Activated naive CD4-positive, alpha-beta T cell treated with anti-CD3 and anti-CD28 coated beads for 36 hours (primary cell): ENCODE measurements at regions of chr12 and their contacts with region 1.

Region 1: DNA sequence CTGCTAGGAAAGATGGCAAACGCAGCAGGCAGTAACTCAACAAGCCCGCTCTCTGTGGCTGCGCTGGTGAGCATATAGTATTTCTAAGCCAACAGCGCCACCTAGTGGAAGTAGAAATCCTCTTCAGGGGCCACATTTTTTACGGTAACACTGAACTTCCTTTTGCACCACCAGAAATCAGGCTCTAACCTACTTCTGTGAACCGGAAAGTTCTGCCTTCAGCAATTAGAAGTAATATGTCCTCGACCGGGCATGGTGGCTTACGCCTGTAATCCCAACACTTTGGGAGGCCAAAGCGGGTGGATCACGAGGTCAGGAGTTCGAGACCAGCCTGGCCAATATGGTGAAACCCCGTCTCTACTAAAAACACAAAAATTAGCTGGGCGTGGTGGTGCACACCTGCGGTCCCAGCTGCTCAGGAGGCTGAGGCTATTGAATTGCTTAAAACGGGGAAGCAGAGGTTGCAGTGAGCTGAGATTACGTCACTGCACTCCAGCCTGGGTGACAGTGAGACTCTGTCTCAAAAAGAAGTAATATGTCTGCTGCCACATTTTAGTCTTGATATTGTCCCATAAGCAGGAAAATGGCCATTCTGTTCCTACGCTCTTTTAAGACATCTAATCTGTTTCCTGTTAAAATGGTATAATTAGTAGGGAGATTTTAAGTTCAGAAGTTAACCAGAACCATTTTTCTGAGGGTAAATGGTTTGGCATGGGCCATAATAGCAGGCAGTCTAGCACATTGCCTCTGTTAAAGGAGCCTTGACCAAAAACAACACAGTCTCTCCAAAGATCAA is 26.8 kb downstream of the APOBEC1 start:
- DNase-seq: peak; percentile 89
- H3K4me3 Mint-ChIP-seq: peak overlapping the region; percentile 65
- H3K27ac Mint-ChIP-seq: peak overlapping the region; percentile 69
- H3K4me1 Mint-ChIP-seq: peaks cover 20% of the 10 kb centered on the region
- H3K27me3 Mint-ChIP-seq: peaks cover 2% of the 10 kb centered on the region

Region 2: GRCh38 chr12:7142056-7142644 is 496.8 kb before region 1 on chr12:
- CTCF ChIA-PET with region 1: interaction called, 4 read pairs
- intact Hi-C with region 1: loop called (anchors 2 kb)
- DNase-seq: peak; percentile 74
- H3K4me3 Mint-ChIP-seq: no peak overlapping the region
- H3K27ac Mint-ChIP-seq: no peak overlapping the region
- H3K4me1 Mint-ChIP-seq: peaks cover 2% of the 10 kb centered on the region
- H3K27me3 Mint-ChIP-seq: no peaks in the 10 kb centered on the region

Region 3: GRCh38 chr12:7374423-7375144 is 264.4 kb before region 1 on chr12:
- CTCF ChIA-PET with region 1: no interaction called
- intact Hi-C with region 1: loop called (anchors 1 kb)
- DNase-seq: peak; percentile 44
- H3K4me3 Mint-ChIP-seq: no peak overlapping the region
- H3K27ac Mint-ChIP-seq: no peak overlapping the region
- H3K4me1 Mint-ChIP-seq: no peaks in the 10 kb centered on the region
- H3K27me3 Mint-ChIP-seq: peaks cover 14% of the 10 kb centered on the region

Region 4: GRCh38 chr12:7583571-7583970 is 55.4 kb before region 1 on chr12:
- CTCF ChIA-PET with region 1: interaction called, 23 read pairs
- intact Hi-C with region 1: loop called (anchors 1 kb)
- DNase-seq: no peak
- H3K4me3 Mint-ChIP-seq: no peak overlapping the region
- H3K27ac Mint-ChIP-seq: no peak overlapping the region
- H3K4me1 Mint-ChIP-seq: peaks cover 2% of the 10 kb centered on the region
- H3K27me3 Mint-ChIP-seq: peaks cover 18% of the 10 kb centered on the region

Region 5: DNA sequence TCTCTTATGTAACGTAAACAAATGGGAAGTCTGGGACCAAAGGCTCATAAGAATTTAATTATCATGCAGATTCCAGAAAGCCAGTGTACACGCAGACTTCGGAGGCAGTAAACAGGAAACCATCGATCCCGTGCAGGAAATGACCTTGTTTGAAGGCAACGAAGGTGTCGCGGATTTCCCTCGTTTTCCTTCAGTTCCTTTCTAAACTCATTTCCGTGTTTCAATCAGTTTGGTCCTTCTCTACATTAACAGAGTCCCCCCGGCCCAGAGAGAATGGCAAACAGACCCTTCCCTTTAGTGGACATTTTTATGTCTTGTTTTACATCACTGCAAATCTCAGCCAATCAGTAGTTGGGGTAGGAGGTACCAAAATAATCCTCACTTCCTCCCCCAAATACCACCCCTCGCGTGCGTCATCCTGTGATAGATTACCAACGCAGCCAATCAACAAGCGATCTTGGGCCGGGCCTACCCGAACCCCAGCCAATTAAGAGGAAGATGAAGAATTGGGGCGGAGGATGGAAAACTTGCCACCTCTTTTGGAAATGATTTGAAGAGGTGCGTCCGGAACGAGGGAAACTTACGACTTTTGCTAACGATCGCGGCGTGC is 387.4 kb after region 1 on chr12:
- CTCF ChIA-PET with region 1: no interaction called
- intact Hi-C with region 1: loop called (anchors 2 kb)
- DNase-seq: peak; percentile 99
- H3K4me3 Mint-ChIP-seq: peak overlapping the region; percentile 94
- H3K27ac Mint-ChIP-seq: peak overlapping the region; percentile 100
- H3K4me1 Mint-ChIP-seq: peaks cover 11% of the 10 kb centered on the region
- H3K27me3 Mint-ChIP-seq: no peaks in the 10 kb centered on the region